ENCODE measurements at regions of chr9 and their contacts with region 1.

Region 1: GRCh38 chr9:27573634-27574590 is 631 bp upstream of the C9orf72 start:
- DNase-seq: peak; percentile 99
- H3K4me3 ChIP-seq: peak overlapping the region; percentile 60 to 77 (median 76)
- H3K27ac ChIP-seq: peak overlapping the region; percentile 74
- H3K4me1 ChIP-seq: peaks cover 13% of the 10 kb centered on the region
- H3K27me3 ChIP-seq: no peaks in the 10 kb centered on the region
- CTCF ChIP-seq: no peak

Region 2: GRCh38 chr9:27489087-27489876 is 84.6 kb before region 1 on chr9:
- CTCF ChIA-PET with region 1: no interaction called
- dilution Hi-C with region 1: no loop called
- in situ Hi-C with region 1: no loop called
- intact Hi-C with region 1: no loop called
- DNase-seq: no peak
- H3K4me3 ChIP-seq: no peak overlapping the region
- H3K27ac ChIP-seq: no peak overlapping the region
- H3K4me1 ChIP-seq: peaks cover 9% of the 10 kb centered on the region
- H3K27me3 ChIP-seq: no peaks in the 10 kb centered on the region
- CTCF ChIP-seq: no peak

Region 3: GRCh38 chr9:27626244-27627187 is 52.6 kb after region 1 on chr9:
- CTCF ChIA-PET with region 1: no interaction called
- dilution Hi-C with region 1: no loop called
- in situ Hi-C with region 1: no loop called
- intact Hi-C with region 1: loop called (anchors 1 kb)
- DNase-seq: peak; percentile 78
- H3K4me3 ChIP-seq: peak overlapping the region in 1 of 3 experiments; percentile 17
- H3K27ac ChIP-seq: peak overlapping the region; percentile 8
- H3K4me1 ChIP-seq: peaks cover 18% of the 10 kb centered on the region
- H3K27me3 ChIP-seq: no peaks in the 10 kb centered on the region
- CTCF ChIP-seq: no peak

Region 4: DNA sequence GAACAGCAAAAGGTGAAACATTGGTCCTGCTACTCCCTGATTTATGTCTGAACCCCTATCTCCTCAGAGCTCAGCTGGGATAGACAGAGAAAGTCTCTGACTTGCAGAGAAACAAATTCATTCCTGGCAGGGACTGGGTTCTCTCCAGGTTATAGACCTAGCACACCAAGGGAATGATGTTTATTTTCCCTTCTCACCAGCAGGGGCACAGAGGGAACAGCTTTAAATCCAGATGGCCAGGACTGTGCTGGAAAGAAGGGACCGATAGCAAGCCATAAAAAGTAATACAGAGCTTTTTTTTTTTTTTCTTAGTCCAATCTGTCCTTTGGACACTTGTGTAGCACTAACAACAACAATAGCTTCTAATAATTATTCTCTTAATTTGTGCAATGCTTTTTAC is 140.5 kb after region 1 on chr9:
- CTCF ChIA-PET with region 1: no interaction called
- dilution Hi-C with region 1: no loop called
- in situ Hi-C with region 1: no loop called
- intact Hi-C with region 1: loop called (anchors 5 kb)
- DNase-seq: no peak
- H3K4me3 ChIP-seq: no peak overlapping the region
- H3K27ac ChIP-seq: no peak overlapping the region
- H3K4me1 ChIP-seq: no peaks in the 10 kb centered on the region
- H3K27me3 ChIP-seq: no peaks in the 10 kb centered on the region
- CTCF ChIP-seq: peak; percentile 9 to 40

Region 5: DNA sequence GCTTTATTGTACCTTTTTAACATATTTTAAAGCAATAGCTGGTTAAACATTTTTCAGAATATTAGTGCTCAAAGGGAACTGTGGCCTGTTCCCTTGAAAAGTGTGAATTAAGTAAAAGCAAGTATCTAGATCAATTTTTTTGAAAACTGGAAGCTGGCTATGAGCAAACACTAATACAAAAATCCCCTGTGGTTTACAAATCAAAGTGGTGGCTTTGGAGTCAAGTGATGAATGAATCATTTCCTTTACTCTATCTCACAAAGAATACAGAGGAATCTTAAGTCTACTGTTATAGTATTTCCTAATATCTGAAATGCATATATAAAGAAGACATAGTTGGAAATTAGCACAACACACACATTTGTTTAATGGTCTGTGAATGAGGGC is 211.8 kb after region 1 on chr9:
- CTCF ChIA-PET with region 1: no interaction called
- dilution Hi-C with region 1: no loop called
- in situ Hi-C with region 1: no loop called
- intact Hi-C with region 1: loop called (anchors 5 kb)
- DNase-seq: peak; percentile 81
- H3K4me3 ChIP-seq: peak overlapping the region in 1 of 3 experiments; percentile 22
- H3K27ac ChIP-seq: peak overlapping the region; percentile 95
- H3K4me1 ChIP-seq: peaks cover 16% of the 10 kb centered on the region
- H3K27me3 ChIP-seq: no peaks in the 10 kb centered on the region
- CTCF ChIP-seq: no peak

Measured in mammary epithelial cell (primary cell).